Activated CD4-positive, alpha-beta T cell treated with anti-CD3 and anti-CD28 coated beads for 36 hours (primary cell): ENCODE measurements at regions of chr3 and their contacts with region 1.

Region 1: GRCh38 chr3:115692887-115693524 is 69.7 kb downstream of the GAP43 start:
- DNase-seq: peak; percentile 81
- ATAC-seq: peak; percentile 81
- H3K4me3 Mint-ChIP-seq: no peak overlapping the region
- H3K27ac Mint-ChIP-seq: no peak overlapping the region
- H3K4me1 Mint-ChIP-seq: no peaks in the 10 kb centered on the region
- H3K27me3 Mint-ChIP-seq: peaks cover 6% of the 10 kb centered on the region

Region 2: DNA sequence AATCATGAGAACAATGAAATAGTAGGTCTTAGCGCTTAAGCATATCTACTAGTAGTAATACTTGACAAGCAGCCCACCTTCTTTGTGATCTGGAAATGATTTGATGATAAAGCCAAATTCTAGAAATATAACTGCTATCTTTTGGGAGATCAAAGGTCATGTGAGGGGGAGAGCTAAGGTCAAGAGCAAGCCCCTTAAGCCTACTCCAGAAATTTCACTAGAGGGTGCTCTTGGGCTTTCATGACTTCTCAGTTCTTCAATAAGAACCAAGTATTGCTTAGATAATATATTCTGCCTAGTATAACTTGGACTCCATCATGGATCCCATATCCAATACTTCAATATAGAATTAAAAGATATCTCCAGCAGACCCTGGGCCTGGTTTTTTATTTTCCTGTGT is 865.5 kb before region 1 on chr3:
- CTCF ChIA-PET with region 1: no interaction called
- POLR2A ChIA-PET with region 1: no interaction called
- intact Hi-C with region 1: loop called (anchors 1 to 5 kb)
- DNase-seq: peak; percentile 12
- ATAC-seq: peak; percentile 63
- H3K4me3 Mint-ChIP-seq: no peak overlapping the region
- H3K27ac Mint-ChIP-seq: no peak overlapping the region
- H3K4me1 Mint-ChIP-seq: peaks cover 5% of the 10 kb centered on the region
- H3K27me3 Mint-ChIP-seq: no peaks in the 10 kb centered on the region

Region 3: DNA sequence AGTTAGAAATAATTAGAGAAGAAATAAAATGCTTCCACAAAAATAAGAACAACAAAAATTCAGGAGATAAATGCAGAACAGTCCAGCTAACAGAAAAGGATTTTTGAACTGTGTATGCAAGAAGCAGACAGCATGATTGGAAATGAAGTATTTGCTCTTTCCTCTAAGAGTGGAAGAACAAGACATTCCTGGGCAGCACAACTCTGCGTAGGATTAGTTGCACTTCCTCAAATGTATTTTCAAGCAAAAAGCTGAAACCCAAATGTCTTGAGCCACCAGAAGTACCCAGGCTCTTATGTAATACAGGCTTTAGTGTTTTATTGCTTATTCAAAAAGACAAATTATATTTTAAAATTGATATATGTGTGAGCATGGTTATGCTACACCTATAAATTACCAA is 673.1 kb before region 1 on chr3:
- CTCF ChIA-PET with region 1: no interaction called
- POLR2A ChIA-PET with region 1: no interaction called
- intact Hi-C with region 1: no loop called
- DNase-seq: no peak
- ATAC-seq: no peak
- H3K4me3 Mint-ChIP-seq: no peak overlapping the region
- H3K27ac Mint-ChIP-seq: no peak overlapping the region
- H3K4me1 Mint-ChIP-seq: no peaks in the 10 kb centered on the region
- H3K27me3 Mint-ChIP-seq: no peaks in the 10 kb centered on the region

Region 4: GRCh38 chr3:115040673-115041286 is 652.2 kb before region 1 on chr3:
- CTCF ChIA-PET with region 1: interaction called, 6 read pairs
- POLR2A ChIA-PET with region 1: no interaction called
- intact Hi-C with region 1: loop called (anchors 1 to 2 kb)
- DNase-seq: peak; percentile 50
- ATAC-seq: peak; percentile 61
- H3K4me3 Mint-ChIP-seq: no peak overlapping the region
- H3K27ac Mint-ChIP-seq: no peak overlapping the region
- H3K4me1 Mint-ChIP-seq: peaks cover 11% of the 10 kb centered on the region
- H3K27me3 Mint-ChIP-seq: no peaks in the 10 kb centered on the region

Region 5: DNA sequence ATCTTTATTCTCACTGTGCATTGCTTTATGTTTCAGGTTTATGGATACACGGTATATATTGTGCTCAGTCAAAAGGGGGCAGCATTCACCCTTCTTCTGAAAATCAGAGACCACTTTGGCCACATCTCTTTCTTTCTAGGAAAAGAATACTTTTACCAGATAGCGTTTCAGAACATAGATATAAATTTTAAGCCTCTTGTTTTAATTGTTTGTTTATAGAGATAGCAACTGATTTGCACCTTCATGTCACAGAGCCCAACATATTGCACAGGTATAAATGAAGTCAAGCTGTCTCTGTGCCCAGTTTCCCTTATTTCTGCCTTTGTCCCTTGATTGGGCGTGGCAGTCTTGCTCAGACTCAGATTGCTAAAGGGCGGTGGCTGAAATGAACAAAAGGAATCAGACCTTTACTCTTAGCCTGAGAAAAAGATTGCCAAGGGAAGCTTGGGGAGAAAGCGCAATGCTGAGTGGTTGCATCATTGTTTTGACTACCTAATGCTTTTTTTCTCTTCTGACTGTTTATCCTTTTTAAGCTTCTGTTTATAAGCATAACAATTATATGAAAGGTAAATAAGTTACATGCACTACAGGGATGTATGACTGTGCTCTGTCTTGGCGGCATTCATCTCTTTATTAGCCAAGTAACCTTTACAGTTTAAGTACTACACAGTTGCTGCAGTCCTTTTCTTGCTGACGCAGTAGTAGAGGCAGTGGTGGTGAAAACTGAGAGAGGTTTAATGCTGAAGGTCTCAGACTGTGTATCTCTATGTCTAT is 475.1 kb before region 1 on chr3:
- CTCF ChIA-PET with region 1: interaction called, 12 read pairs
- POLR2A ChIA-PET with region 1: no interaction called
- intact Hi-C with region 1: loop called (anchors 1 kb)
- DNase-seq: peak; percentile 32
- ATAC-seq: no peak
- H3K4me3 Mint-ChIP-seq: no peak overlapping the region
- H3K27ac Mint-ChIP-seq: no peak overlapping the region
- H3K4me1 Mint-ChIP-seq: no peaks in the 10 kb centered on the region
- H3K27me3 Mint-ChIP-seq: peaks cover 1% of the 10 kb centered on the region

Region 6: GRCh38 chr3:115758076-115758763 is 65.2 kb after region 1 on chr3:
- CTCF ChIA-PET with region 1: no interaction called
- POLR2A ChIA-PET with region 1: no interaction called
- intact Hi-C with region 1: no loop called
- DNase-seq: no peak
- ATAC-seq: no peak
- H3K4me3 Mint-ChIP-seq: no peak overlapping the region
- H3K27ac Mint-ChIP-seq: no peak overlapping the region
- H3K4me1 Mint-ChIP-seq: no peaks in the 10 kb centered on the region
- H3K27me3 Mint-ChIP-seq: peaks cover 15% of the 10 kb centered on the region

Region 7: DNA sequence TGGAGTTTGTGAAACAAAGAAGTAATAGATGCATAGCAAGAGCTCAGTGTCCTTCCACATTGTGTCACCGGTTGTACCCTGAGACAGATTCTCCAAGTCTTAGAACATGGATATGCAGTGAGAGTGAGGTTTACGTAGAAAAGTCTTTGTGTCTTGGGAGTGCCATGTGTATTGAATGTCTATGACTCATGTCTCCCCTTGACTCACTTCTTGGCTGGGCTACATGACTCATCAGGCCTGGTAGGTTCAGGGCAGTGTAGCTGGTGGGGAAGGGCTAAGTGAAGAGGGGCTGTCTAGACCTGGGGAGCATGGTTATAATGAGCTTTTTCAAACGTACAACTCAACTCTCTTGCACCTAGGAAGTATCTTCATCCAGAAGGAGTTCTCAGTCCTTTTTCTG is 97.8 kb after region 1 on chr3:
- CTCF ChIA-PET with region 1: no interaction called
- POLR2A ChIA-PET with region 1: no interaction called
- intact Hi-C with region 1: no loop called
- DNase-seq: peak; percentile 75
- ATAC-seq: peak; percentile 95
- H3K4me3 Mint-ChIP-seq: no peak overlapping the region
- H3K27ac Mint-ChIP-seq: peak overlapping the region; percentile 25
- H3K4me1 Mint-ChIP-seq: peaks cover 33% of the 10 kb centered on the region
- H3K27me3 Mint-ChIP-seq: no peaks in the 10 kb centered on the region

Region 8: DNA sequence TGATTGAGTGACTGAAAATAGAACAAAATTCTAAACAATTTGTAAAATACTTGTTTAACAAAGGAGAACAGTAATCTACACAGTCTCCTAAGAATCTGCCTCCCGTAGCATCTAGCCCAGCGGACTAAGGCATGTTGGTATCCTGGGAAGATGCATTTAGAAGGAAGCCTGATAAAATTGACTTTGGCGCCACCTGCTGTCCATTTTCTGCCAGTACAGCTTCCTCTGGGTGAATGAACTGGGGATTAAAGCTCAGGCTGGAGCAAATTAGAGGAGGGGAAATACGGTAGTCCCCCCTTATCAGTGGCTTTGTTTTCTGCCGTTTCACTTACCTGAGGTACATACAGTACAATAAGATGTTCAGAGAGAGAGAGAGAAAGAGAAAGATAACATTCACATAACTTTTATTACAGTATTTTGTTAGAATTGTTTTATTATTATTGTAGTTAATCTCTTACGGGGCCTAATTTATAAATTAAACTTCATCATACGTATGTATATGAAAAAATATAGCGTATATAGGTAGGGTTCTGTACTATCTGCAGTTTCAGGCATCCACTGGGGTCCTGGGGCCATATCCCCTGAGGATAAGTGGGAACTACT is 121.9 kb after region 1 on chr3:
- CTCF ChIA-PET with region 1: interaction called, 5 read pairs
- POLR2A ChIA-PET with region 1: no interaction called
- intact Hi-C with region 1: loop called (anchors 1 to 2 kb)
- DNase-seq: peak; percentile 79
- ATAC-seq: peak; percentile 57
- H3K4me3 Mint-ChIP-seq: no peak overlapping the region
- H3K27ac Mint-ChIP-seq: no peak overlapping the region
- H3K4me1 Mint-ChIP-seq: no peaks in the 10 kb centered on the region
- H3K27me3 Mint-ChIP-seq: peaks cover 7% of the 10 kb centered on the region

Region 9: GRCh38 chr3:115819785-115820384 is 126.9 kb after region 1 on chr3:
- CTCF ChIA-PET with region 1: interaction called, 5 read pairs
- POLR2A ChIA-PET with region 1: no interaction called
- intact Hi-C with region 1: loop called (anchors 1 to 2 kb)
- DNase-seq: peak; percentile 68
- ATAC-seq: peak; percentile 90
- H3K4me3 Mint-ChIP-seq: no peak overlapping the region
- H3K27ac Mint-ChIP-seq: no peak overlapping the region
- H3K4me1 Mint-ChIP-seq: no peaks in the 10 kb centered on the region
- H3K27me3 Mint-ChIP-seq: no peaks in the 10 kb centered on the region